Adrenal gland (tissue), 19 donors: ENCODE measurements at regions of chr2 and their contacts with region 1.

Region 1: DNA sequence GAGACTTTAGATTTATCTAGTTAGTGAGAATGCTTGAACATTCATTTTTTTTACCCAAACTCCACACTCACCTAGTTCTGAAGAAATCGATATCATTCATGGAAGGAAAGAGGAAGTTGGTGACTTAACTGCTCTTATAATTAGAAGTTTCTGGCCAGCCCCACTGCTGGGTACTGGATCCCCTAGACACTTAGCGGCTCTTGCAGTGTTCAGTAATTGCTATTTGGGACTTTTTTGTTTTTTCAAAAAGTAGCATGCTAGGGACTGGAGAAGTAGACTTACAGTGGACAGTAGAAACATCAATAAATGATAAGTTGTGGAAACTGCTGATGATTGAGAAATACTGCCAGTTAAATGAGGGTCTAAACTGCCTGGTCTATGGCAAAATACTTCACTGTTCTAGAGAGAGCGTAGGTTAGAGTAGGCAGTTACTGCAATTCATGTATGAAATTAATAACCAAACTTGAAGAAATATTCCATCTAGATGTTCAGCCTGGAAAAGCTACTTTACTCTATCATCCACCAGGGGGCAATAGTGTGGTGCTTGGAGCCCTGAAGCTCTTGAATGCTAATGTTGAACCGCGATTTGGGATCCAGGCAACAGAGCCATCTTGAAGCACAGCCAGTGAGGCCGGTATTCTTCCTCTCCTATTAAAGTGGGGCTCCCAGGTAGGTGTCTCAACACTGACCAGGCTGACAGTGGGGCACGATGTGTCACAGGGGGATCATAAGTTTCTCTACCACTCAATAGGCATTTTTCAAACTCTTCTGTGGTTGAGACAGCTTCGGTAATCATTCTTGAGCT is 146.1 kb upstream of the SESTD1 start:
- DNase-seq: peak; percentile 41 to 73 (median 53)
- H3K4me3 ChIP-seq: no peak overlapping the region
- H3K27ac ChIP-seq: no peak overlapping the region
- H3K4me1 ChIP-seq: no peaks in the 10 kb centered on the region
- H3K27me3 ChIP-seq: no peaks in the 10 kb centered on the region
- CTCF ChIP-seq: peak; percentile 54 to 80 (median 67)
- POLR2A ChIP-seq: no peak

Region 2: GRCh38 chr2:179226203-179226960 is 184.4 kb before region 1 on chr2:
- intact Hi-C with region 1: loop called in 1 of 2 experiments (anchors 10 kb)
- DNase-seq: peak in 1 of 7 donors; percentile 39
- H3K4me3 ChIP-seq: no peak overlapping the region
- H3K27ac ChIP-seq: no peak overlapping the region
- H3K4me1 ChIP-seq: peaks cover 0 to 11% of the 10 kb centered on the region in 2 donors
- H3K27me3 ChIP-seq: no peaks in the 10 kb centered on the region
- CTCF ChIP-seq: no peak
- POLR2A ChIP-seq: no peak

Region 3: GRCh38 chr2:179373816-179374215 is 36.9 kb before region 1 on chr2:
- intact Hi-C with region 1: no loop called
- DNase-seq: no peak
- H3K4me3 ChIP-seq: no peak overlapping the region
- H3K27ac ChIP-seq: no peak overlapping the region
- H3K4me1 ChIP-seq: no peaks in the 10 kb centered on the region
- H3K27me3 ChIP-seq: no peaks in the 10 kb centered on the region
- CTCF ChIP-seq: no peak
- POLR2A ChIP-seq: no peak